Common myeloid progenitor, CD34-positive (primary cell): ENCODE measurements at regions of chr5 and their contacts with region 1.

Region 1: GRCh38 chr5:76303921-76304320 is 99.2 kb upstream of the IQGAP2 start:
- DNase-seq: peak in 2 of 3 donors; percentile 67 to 71
- H3K4me3 ChIP-seq: no peak overlapping the region
- H3K27ac ChIP-seq: no peak overlapping the region
- H3K4me1 ChIP-seq: peaks cover 15 to 70% (median 50%) of the 10 kb centered on the region in 4 experiments
- H3K27me3 ChIP-seq: no peaks in the 10 kb centered on the region

Region 2: DNA sequence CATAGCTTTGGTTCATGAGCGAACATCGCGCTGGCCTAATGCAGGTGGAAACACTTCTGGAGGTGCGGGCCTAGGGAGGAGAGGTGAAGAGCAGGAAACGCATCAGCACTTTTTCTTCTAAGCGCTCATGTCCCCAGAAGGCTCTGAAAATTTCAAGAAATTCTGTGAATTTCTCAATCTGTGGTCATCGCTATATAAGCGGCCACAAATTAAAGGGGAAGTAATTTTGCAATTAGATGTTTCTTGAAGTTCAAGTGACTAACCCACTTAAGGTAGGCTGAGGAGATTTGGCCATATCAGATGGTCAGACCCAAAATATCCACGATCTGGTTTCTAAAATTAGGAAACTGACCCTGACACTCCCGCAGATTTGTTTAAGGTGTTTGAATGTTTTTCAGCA is 983.6 kb before region 1 on chr5:
- CTCF ChIA-PET with region 1: no interaction called
- POLR2A ChIA-PET with region 1: no interaction called
- DNase-seq: peak in 2 of 3 donors; percentile 64 to 65
- H3K4me3 ChIP-seq: peak overlapping the region in 1 of 7 experiments; percentile 14
- H3K27ac ChIP-seq: no peak overlapping the region
- H3K4me1 ChIP-seq: peaks cover 0 to 28% (median 3%) of the 10 kb centered on the region in 4 experiments
- H3K27me3 ChIP-seq: no peaks in the 10 kb centered on the region

Region 3: GRCh38 chr5:76314643-76315042 is 10.7 kb after region 1 on chr5:
- CTCF ChIA-PET with region 1: interaction called, 34 read pairs
- POLR2A ChIA-PET with region 1: no interaction called
- DNase-seq: no peak
- H3K4me3 ChIP-seq: no peak overlapping the region
- H3K27ac ChIP-seq: no peak overlapping the region
- H3K4me1 ChIP-seq: peaks cover 8 to 16% (median 14%) of the 10 kb centered on the region in 4 experiments
- H3K27me3 ChIP-seq: no peaks in the 10 kb centered on the region

Region 4: DNA sequence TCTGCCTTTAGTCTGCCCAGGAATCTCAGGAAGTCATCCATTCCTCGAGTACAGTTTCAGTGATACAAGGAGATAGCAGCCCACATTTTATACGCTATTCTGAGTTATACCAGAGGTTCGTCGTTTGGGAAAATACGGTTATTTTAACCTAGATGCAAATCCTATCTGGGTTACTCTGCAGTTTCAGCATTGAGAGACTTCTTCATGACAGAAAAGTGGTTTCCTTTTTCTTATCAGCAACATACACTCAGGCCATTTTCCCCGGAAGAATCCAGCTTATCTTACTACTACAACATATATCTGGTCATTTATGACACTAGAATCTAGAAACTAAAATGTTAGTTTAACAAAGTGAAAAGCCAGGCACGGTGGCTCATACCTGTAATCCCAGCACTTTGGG is 15.8 kb after region 1 on chr5:
- CTCF ChIA-PET with region 1: interaction called, 34 read pairs
- POLR2A ChIA-PET with region 1: interaction called, 7 read pairs
- DNase-seq: peak; percentile 73 to 92 (median 84)
- H3K4me3 ChIP-seq: peak overlapping the region in 5 of 7 experiments; percentile 15 to 56 (median 28)
- H3K27ac ChIP-seq: peak overlapping the region; percentile 46 to 73
- H3K4me1 ChIP-seq: peaks cover 17 to 32% (median 31%) of the 10 kb centered on the region in 4 experiments
- H3K27me3 ChIP-seq: no peaks in the 10 kb centered on the region